MCF 10A (cell line): ENCODE measurements at regions of chr14 and their contacts with region 1.

Region 1: GRCh38 chr14:51989293-51990234 is at the start of gene RTRAF:
- DNase-seq: peak; percentile 91
- H3K4me3 Mint-ChIP-seq: peak within 1 kb of the TSS; percentile 85
- H3K27ac Mint-ChIP-seq: peak within 1 kb of the TSS; percentile 91
- H3K4me1 Mint-ChIP-seq: peaks cover 19% of the 10 kb centered on the region
- H3K27me3 Mint-ChIP-seq: no peaks in the 10 kb centered on the region
- CTCF ChIP-seq: no peak
- total RNA-seq, gene RTRAF: 285 and 358 TPM in 2 replicates

Region 2: GRCh38 chr14:52080817-52081755 is 91.5 kb after region 1 on chr14:
- CTCF ChIA-PET with region 1: no interaction called
- POLR2A ChIA-PET with region 1: interaction called, 10 read pairs
- intact Hi-C with region 1: no loop called
- DNase-seq: peak; percentile 55
- H3K4me3 Mint-ChIP-seq: no peak overlapping the region
- H3K27ac Mint-ChIP-seq: peak overlapping the region; percentile 82
- H3K4me1 Mint-ChIP-seq: peaks cover 40% of the 10 kb centered on the region
- H3K27me3 Mint-ChIP-seq: no peaks in the 10 kb centered on the region
- CTCF ChIP-seq: no peak

Region 3: DNA sequence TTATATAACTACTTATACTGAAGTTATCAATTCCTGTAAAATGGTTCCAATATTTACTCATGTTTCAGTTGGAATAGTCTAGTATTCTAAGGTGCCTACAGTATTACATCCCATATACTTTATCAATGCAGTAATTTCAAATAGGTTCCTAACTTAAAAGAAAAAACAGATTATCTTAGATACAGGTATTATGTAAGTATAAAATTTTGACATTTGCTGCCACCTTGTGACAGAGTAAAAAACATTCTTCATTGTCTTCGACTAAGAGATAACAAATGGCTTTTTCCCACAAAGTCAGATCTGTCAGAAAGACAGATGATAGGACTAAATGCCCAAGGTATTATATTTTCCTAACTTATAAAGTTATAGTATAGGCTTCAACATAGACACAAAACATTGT is 484.0 kb after region 1 on chr14:
- CTCF ChIA-PET with region 1: no interaction called
- POLR2A ChIA-PET with region 1: interaction called, 3 read pairs
- intact Hi-C with region 1: loop called (anchors 10 kb)
- DNase-seq: peak; percentile 53
- H3K4me3 Mint-ChIP-seq: no peak overlapping the region
- H3K27ac Mint-ChIP-seq: no peak overlapping the region
- H3K4me1 Mint-ChIP-seq: no peaks in the 10 kb centered on the region
- H3K27me3 Mint-ChIP-seq: no peaks in the 10 kb centered on the region
- CTCF ChIP-seq: peak; percentile 32